ENCODE measurements at regions of chrX and their contacts with region 1.

Region 1: DNA sequence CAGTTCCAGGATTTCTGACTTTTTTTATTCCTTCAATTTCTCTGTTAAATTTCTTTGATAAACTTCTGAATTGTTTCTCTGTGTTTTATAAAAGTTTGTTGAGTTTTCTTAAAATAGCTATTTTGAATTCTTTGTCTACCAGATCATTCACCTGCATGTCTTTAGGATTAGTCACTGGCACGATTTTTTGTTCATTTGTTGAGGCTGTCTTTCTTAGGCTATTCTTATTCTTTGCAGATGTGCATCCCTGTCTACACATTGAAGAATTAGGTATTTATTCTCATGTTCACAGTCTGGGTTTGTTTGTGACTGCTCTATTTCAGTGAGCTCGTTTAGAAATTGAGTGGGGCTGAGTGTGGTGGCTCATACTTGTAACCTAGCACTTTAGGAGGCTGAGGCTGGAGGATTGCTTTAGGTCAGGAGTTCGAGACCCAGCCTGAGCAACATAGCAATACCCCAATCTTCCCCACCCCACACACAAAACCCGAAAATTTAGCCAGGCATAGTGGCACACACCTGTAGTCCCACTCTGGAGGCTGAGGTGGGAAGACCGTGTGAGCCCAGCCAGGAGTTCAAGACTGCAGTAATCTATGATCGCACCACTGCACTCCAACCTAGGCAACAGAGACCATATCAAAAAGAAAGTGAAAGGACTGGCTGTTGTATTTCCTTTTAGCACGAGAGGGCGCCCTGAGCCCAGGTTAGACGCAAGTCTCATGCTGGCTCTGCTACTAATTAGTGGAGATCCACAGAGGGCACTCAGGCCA is 42.0 kb downstream of the F8 start:
- DNase-seq: peak; percentile 54 to 85 (median 60)
- ATAC-seq: peak; percentile 99
- H3K4me3 ChIP-seq: peak overlapping the region; percentile 20; the same call in 1 of the 2 replicates
- H3K27ac ChIP-seq: no peak overlapping the region; the same call in 2 of the 3 replicates
- H3K4me1 ChIP-seq: no peaks in the 10 kb centered on the region; a peak in 1 of 5 replicates
- H3K27me3 ChIP-seq: no peaks in the 10 kb centered on the region
- CTCF ChIP-seq: peak; percentile 82 to 96 (median 96)
- EP300 ChIP-seq: no peak
- POLR2A ChIP-seq: no peak
- RAD21 ChIP-seq: peak; percentile 84 to 95

Region 2: DNA sequence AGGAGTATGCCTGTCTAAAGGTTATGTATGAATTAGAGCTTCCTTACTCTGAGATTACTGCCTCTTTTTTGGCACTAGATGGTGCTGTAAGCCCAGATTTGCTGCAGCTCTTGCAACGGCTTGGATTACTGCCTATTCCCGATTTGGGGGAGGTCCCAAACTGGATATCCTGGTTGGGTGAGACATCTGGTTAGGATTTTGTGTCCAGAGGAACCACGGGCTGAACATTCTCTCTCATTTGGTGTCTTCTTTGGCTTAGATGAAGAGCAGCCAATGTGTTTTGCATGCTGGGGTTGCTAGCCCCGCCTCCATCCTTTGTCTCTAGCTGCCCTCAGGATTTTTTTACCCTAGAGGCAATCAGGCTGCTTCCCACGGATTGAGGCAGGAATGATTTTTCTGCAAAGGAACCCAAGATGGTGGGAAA is 62.4 kb before region 1 on chrX:
- CTCF ChIA-PET with region 1: interaction called, 3 read pairs
- POLR2A ChIA-PET with region 1: no interaction called
- in situ Hi-C with region 1: no loop called
- intact Hi-C with region 1: loop called (anchors 2 kb)
- DNase-seq: peak; percentile 30 to 68 (median 33)
- ATAC-seq: peak; percentile 87
- H3K4me3 ChIP-seq: peak overlapping the region; percentile 29
- H3K27ac ChIP-seq: no peak overlapping the region; the same call in 2 of the 3 replicates
- H3K4me1 ChIP-seq: no peaks in the 10 kb centered on the region; a peak in 1 of 5 replicates
- H3K27me3 ChIP-seq: no peaks in the 10 kb centered on the region
- CTCF ChIP-seq: peak; percentile 62 to 73 (median 73); a peak in 5 of 6 replicates
- EP300 ChIP-seq: no peak
- POLR2A ChIP-seq: no peak
- RAD21 ChIP-seq: peak; percentile 59 to 87

Region 3: GRCh38 chrX:155056877-155057792 is 76.6 kb after region 1 on chrX:
- CTCF ChIA-PET with region 1: interaction called, 15 read pairs
- POLR2A ChIA-PET with region 1: interaction called, 4 read pairs
- in situ Hi-C with region 1: loop called (anchors 5 kb)
- intact Hi-C with region 1: loop called (anchors 1 kb)
- DNase-seq: peak; percentile 52 to 82 (median 65)
- ATAC-seq: peak; percentile 97
- H3K4me3 ChIP-seq: no peak overlapping the region
- H3K27ac ChIP-seq: no peak overlapping the region
- H3K4me1 ChIP-seq: peaks cover 0 to 9% of the 10 kb centered on the region in 2 experiments; a peak in 3 of 5 replicates
- H3K27me3 ChIP-seq: no peaks in the 10 kb centered on the region
- CTCF ChIP-seq: peak; percentile 72 to 84 (median 76)
- EP300 ChIP-seq: no peak
- POLR2A ChIP-seq: no peak
- RAD21 ChIP-seq: peak; percentile 65 to 80

Region 4: GRCh38 chrX:155086202-155086840 is 105.8 kb after region 1 on chrX:
- CTCF ChIA-PET with region 1: no interaction called
- POLR2A ChIA-PET with region 1: no interaction called
- in situ Hi-C with region 1: no loop called
- intact Hi-C with region 1: loop called (anchors 2 kb)
- DNase-seq: peak; percentile 30 to 85 (median 46)
- ATAC-seq: peak; percentile 97
- H3K4me3 ChIP-seq: no peak overlapping the region
- H3K27ac ChIP-seq: no peak overlapping the region
- H3K4me1 ChIP-seq: peaks cover 13% of the 10 kb centered on the region in 2 experiments
- H3K27me3 ChIP-seq: no peaks in the 10 kb centered on the region
- CTCF ChIP-seq: peak; percentile 60 to 69 (median 64)
- EP300 ChIP-seq: no peak
- POLR2A ChIP-seq: no peak
- RAD21 ChIP-seq: peak in 1 of 2 experiments; percentile 58; a peak in 3 of 4 replicates

Region 5: DNA sequence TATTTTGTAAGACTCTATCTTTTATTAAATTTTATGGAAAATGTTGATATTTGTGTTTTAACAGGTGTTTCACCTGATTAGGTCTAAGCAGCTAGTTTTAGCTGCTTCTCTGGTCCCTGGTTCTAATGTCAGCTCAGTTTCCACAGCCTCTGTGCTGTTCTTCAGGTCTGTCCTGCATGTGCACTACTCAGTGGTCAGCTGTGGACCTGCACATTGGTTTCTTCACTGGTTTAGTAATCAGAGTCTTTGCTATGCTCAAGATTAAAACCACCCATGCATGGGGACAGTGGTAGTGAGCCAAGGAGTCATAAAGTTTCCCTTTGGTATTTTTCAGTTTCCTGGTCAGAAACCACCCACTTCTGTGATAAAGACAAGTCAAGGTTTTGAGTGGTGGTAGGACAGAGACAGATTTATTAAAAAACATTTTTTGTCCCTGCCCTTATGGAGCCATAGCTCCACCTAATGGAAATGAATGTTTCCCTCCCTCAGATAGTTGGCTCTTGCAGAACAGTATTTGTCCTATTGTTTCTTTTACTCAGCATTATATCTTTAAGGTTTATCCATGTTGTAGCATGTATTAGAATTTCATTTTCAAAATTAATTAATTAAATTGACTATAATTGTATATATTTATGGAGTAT is 199.0 kb after region 1 on chrX:
- CTCF ChIA-PET with region 1: interaction called, 3 read pairs
- POLR2A ChIA-PET with region 1: no interaction called
- in situ Hi-C with region 1: no loop called
- intact Hi-C with region 1: loop called (anchors 10 kb)
- DNase-seq: peak in 2 of 4 experiments; percentile 10 to 28
- ATAC-seq: peak; percentile 60
- H3K4me3 ChIP-seq: no peak overlapping the region
- H3K27ac ChIP-seq: no peak overlapping the region
- H3K4me1 ChIP-seq: no peaks in the 10 kb centered on the region
- H3K27me3 ChIP-seq: no peaks in the 10 kb centered on the region
- CTCF ChIP-seq: peak; percentile 40 to 72 (median 46); a peak in 5 of 6 replicates
- EP300 ChIP-seq: no peak
- POLR2A ChIP-seq: no peak
- RAD21 ChIP-seq: peak; percentile 68 to 71

Region 6: DNA sequence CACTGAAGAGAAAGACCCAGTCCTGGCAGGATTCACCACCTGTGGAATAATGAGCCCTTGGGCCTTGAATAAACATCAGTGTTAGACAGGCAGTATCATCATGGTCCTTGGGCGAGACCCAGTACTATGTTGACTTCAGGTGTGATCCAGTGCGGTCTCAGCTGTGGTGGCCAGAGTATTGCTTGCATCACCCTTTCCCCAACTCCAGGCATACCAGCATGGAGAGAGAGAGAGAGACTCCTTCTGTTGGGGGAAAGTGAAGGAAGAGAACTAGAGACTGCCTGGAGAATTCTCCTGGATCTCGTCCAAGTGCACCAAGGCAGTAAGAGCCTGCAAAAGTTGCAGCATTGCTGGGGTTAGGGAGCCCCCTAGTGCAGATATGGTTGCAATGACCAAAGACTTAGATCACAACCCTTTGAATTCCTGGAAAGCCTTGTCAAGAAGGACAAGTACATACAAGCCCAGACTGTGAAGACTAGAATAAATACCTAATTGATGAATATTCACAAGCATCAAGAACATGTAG is 839.5 kb after region 1 on chrX:
- CTCF ChIA-PET with region 1: no interaction called
- POLR2A ChIA-PET with region 1: no interaction called
- in situ Hi-C with region 1: loop called (anchors 5 kb)
- intact Hi-C with region 1: loop called (anchors 2 kb)
- DNase-seq: peak; percentile 28 to 80 (median 44)
- ATAC-seq: peak; percentile 86
- H3K4me3 ChIP-seq: no peak overlapping the region
- H3K27ac ChIP-seq: no peak overlapping the region
- H3K4me1 ChIP-seq: no peaks in the 10 kb centered on the region
- H3K27me3 ChIP-seq: no peaks in the 10 kb centered on the region
- CTCF ChIP-seq: peak; percentile 71 to 83 (median 77)
- EP300 ChIP-seq: no peak
- POLR2A ChIP-seq: no peak
- RAD21 ChIP-seq: peak; percentile 83 to 92